HEK293 (cell line): ENCODE measurements at regions of chr20 and their contacts with region 1.

Region 1: GRCh38 chr20:53187392-53188068 is 215.4 kb downstream of the TSHZ2 start:
- H3K4me3 ChIP-seq: no peak overlapping the region
- H3K27ac ChIP-seq: no peak overlapping the region
- H3K4me1 ChIP-seq: no peaks in the 10 kb centered on the region
- CTCF ChIP-seq: no peak

Region 2: DNA sequence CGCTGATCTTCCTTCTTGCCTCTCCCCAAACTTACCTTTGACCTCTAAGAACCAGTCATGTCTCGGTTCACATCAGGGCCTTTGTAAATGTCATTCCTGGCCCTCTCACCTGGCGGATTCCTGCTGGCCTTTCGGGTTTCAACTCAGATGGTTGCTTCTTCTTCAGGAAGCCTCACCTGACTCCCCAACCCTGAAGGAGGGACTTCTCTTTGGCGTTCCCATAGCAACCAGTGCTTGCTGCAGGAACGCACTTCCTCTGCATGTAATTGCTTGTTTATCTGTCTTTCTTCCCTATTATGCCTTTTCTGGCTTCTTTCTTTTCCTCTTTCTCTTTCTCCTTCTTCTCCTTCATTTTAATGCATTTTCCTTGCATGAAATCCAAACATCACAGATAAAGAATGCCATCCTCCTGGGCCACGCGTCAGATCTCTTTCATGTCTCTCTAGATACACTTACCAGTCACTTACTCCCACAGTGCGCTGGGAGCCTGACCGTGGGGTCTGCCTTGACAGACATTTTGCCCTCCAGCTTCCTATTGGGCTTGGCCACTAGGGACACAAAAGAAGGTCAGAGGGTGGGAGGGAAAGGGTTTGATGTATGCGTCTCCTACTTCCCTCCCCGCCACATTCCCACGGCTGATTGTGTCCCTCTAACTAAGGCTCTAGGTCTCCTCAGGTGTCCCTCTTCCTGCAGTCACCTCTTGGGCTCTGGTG is 511.1 kb before region 1 on chr20:
- CTCF ChIA-PET with region 1: no interaction called
- POLR2A ChIA-PET with region 1: no interaction called
- H3K4me3 ChIP-seq: no peak overlapping the region
- H3K27ac ChIP-seq: no peak overlapping the region
- H3K4me1 ChIP-seq: no peaks in the 10 kb centered on the region
- CTCF ChIP-seq: no peak

Region 3: DNA sequence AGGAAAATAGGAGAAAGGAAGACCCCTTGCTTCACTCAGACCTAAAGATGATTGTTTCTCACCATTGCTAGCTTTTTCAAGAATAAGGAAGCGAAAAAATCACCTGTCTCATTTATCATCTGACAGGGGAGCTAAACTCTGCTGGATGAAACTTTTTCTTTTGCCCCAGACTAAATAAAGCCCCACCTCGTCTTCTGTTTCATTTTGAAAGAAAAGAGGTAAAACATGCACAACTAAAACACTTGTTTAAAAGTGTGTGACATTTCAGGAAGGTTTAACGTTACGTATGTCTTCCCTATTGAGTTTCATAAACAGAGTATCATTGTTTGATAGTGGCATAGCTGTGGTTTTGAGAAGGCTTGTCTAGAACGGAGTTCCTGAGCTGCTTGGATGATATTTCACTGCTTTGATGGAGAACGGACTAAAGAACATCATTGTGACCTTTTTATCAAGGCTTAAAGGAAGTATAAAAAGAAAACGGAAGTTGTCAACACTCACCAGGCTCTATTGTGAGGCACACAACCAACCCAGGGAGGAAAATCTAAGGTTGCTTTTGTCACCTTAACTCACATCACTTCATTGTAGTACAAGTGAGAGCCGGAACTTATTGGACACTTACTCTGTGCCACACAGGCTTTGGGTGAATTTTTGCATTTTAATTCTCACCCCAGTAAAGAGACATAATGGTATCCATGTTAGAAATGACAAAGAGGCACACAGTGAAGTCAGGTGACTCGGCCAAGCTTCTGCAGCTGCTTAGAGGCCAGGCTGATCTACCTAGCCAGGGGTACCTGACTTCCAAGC is 185.8 kb before region 1 on chr20:
- CTCF ChIA-PET with region 1: no interaction called
- POLR2A ChIA-PET with region 1: no interaction called
- H3K4me3 ChIP-seq: no peak overlapping the region
- H3K27ac ChIP-seq: no peak overlapping the region
- H3K4me1 ChIP-seq: no peaks in the 10 kb centered on the region; the same call in 1 of the 2 replicates
- CTCF ChIP-seq: no peak

Region 4: GRCh38 chr20:53176134-53176533 is 11.4 kb before region 1 on chr20:
- CTCF ChIA-PET with region 1: no interaction called
- POLR2A ChIA-PET with region 1: no interaction called
- H3K4me3 ChIP-seq: no peak overlapping the region
- H3K27ac ChIP-seq: no peak overlapping the region
- H3K4me1 ChIP-seq: no peaks in the 10 kb centered on the region
- CTCF ChIP-seq: no peak

Region 5: GRCh38 chr20:53208110-53208832 is 20.7 kb after region 1 on chr20:
- CTCF ChIA-PET with region 1: interaction called, 10 read pairs
- POLR2A ChIA-PET with region 1: no interaction called
- H3K4me3 ChIP-seq: no peak overlapping the region
- H3K27ac ChIP-seq: no peak overlapping the region
- H3K4me1 ChIP-seq: no peaks in the 10 kb centered on the region; the same call in 1 of the 2 replicates
- CTCF ChIP-seq: no peak

Region 6: DNA sequence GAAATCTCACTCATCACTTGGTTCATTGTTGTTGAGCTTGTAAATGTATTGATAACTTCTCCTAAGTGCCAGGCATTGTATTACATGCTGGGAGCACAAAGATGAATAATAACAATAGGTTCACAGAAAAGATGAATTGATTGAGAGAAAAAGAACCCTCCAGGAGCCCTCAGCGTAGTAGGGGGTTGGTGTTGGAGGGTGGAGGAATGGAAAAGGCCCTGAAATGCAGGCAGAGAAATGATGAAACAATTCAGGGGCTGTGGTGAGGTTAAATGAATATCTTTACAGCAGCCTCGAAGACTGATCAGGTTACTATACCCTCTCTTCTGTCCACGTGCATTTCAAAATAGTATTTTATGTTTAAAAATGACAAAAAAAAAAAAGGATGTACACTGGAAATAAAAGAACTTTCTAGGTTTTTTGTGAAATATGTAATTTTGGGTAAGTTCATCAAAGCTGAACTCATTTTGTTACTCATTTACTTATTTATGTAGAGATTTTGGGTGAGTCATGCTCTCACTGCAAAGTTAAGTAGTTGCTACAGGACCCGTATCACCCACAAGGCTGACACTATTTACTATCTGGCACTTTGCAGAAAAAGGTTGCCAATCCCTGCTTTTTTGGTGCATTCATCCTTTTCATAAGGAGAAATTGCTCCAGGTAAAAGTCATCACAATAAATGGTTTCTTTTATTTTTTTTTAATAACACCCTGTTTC is 128.8 kb after region 1 on chr20:
- CTCF ChIA-PET with region 1: no interaction called
- POLR2A ChIA-PET with region 1: no interaction called
- H3K4me3 ChIP-seq: no peak overlapping the region
- H3K27ac ChIP-seq: no peak overlapping the region
- H3K4me1 ChIP-seq: no peaks in the 10 kb centered on the region
- CTCF ChIP-seq: no peak